ENCODE measurements at regions of chr18 and their contacts with region 1.

Region 1: GRCh38 chr18:77765468-77765867 is 515.8 kb downstream of the GALR1 start:
- DNase-seq: peak; percentile 10
- H3K4me3 ChIP-seq: no peak overlapping the region
- H3K27ac ChIP-seq: no peak overlapping the region
- H3K4me1 ChIP-seq: no peaks in the 10 kb centered on the region
- H3K27me3 ChIP-seq: peaks cover 3% of the 10 kb centered on the region
- CTCF ChIP-seq: peak in 3 of 4 experiments; percentile 16 to 45 (median 40)
- POLR2A ChIP-seq: no peak

Region 2: DNA sequence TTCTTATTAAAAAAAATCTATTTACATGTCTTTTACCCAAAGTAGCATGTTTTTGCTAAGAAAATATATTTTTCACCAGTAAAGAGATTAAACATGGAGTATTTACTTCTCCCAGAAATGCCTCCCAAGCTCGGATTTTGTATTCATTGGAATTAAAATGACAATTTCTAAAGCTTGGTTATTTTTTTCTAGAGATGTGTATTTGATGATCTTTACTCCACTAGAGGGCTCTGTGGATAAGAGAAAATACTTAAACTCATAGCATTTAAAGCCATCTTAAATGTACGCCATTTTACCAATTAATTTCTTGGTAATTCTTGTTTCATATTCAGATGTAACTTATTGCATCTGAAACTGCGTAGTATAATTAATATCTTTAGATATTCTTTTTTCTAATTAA is 54.4 kb before region 1 on chr18:
- intact Hi-C with region 1: no loop called
- DNase-seq: no peak
- H3K4me3 ChIP-seq: no peak overlapping the region
- H3K27ac ChIP-seq: no peak overlapping the region
- H3K4me1 ChIP-seq: no peaks in the 10 kb centered on the region
- H3K27me3 ChIP-seq: no peaks in the 10 kb centered on the region
- CTCF ChIP-seq: no peak
- POLR2A ChIP-seq: no peak

Region 3: DNA sequence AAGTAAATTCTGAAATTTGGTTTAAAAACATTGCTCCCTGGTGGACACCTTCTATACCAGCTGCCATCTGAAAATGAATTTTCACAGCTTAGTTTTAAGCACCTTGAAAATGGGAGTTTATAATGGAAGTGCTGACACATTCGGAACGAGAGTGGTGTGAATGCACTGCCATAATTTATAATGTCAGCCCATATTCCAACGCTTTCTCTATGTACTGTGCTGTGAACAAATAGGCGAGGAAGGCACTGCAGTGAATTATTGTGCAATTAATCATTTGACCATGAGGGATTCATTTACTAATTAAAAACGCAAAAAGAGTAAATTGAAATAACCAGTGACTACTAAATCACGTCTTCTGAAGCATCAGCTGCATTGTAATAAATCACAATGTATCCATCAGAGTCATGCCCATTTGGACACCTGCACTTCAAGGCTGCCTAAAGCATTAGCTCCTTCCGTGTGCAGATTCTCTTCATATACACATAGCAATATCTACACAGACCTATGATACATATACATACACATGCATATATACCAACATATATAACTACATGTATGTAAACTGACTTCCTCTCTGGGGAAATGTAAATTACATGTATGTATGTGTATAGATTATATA is 184.0 kb after region 1 on chr18:
- intact Hi-C with region 1: loop called (anchors 10 kb)
- DNase-seq: no peak
- H3K4me3 ChIP-seq: no peak overlapping the region
- H3K27ac ChIP-seq: no peak overlapping the region
- H3K4me1 ChIP-seq: no peaks in the 10 kb centered on the region
- H3K27me3 ChIP-seq: no peaks in the 10 kb centered on the region
- CTCF ChIP-seq: no peak
- POLR2A ChIP-seq: no peak

Region 4: GRCh38 chr18:78138983-78139496 is 373.6 kb after region 1 on chr18:
- intact Hi-C with region 1: no loop called
- DNase-seq: no peak
- H3K4me3 ChIP-seq: no peak overlapping the region
- H3K27ac ChIP-seq: no peak overlapping the region
- H3K4me1 ChIP-seq: no peaks in the 10 kb centered on the region
- H3K27me3 ChIP-seq: no peaks in the 10 kb centered on the region
- CTCF ChIP-seq: no peak
- POLR2A ChIP-seq: no peak

Measured in prostate gland (tissue), 2 donors.